GM12878 (cell line): ENCODE measurements at regions of chr12 and their contacts with region 1.

Region 1: DNA sequence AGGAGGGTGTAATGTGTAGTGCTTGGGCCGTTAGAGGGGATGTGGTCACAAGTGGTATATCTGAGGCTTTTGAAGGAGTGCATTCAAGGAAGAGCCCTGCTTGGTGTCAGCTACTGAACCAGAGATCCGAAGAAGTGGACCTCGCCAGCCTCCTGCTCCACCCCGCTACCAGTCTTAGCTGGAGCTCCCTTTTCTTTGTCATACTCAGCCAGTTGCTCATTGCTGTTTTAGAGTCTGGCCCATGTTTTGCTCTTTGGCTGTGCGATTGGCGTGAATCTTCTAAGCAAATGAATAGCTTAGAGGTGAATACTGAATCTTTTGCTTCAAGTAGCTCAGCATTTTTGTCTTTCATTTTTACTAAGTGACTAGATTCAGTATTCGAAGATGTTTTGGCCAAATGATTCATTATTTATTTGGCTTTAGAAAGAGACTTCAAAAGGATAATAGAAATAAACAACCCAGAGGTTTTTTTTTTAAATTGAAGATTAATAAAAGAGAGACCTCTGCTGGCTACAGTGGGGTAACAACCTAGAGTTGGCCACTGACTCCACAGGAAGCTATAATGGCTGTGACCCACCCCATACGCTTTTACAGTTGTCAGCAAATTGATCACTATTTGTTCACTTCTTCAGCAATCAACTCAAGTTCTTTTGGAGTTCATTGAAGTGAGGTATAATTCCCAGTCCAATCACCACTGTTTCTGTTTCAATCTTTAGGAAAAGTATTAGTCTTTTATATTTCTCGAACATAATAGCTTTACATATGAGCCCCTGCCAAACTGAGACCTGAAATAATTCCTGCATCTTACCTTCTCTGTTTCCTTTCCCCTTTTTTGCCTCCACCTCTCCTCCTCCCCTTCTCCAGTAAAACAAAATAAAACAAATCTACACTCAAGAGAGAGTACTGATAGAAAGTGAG is 19.9 kb downstream of the CDKN1B start:
- DNase-seq: peak; percentile 45
- ATAC-seq: peak; percentile 95
- H3K4me3 ChIP-seq: peak overlapping the region; percentile 48; the same call in 1 of the 2 replicates
- H3K27ac ChIP-seq: peak overlapping the region; percentile 71
- H3K4me1 ChIP-seq: peaks cover 5% of the 10 kb centered on the region
- H3K27me3 ChIP-seq: no peaks in the 10 kb centered on the region
- CTCF ChIP-seq: peak; percentile 53 to 63 (median 58); a peak in 5 of 6 replicates
- EP300 ChIP-seq: 0 out of 4 replicates have a peak, but pooled peaks of 1 of the 2 experiments have one; percentile 8
- POLR2A ChIP-seq: peak; percentile 44; the same call in 1 of the 2 replicates
- RAD21 ChIP-seq: peak; percentile 62

Region 2: DNA sequence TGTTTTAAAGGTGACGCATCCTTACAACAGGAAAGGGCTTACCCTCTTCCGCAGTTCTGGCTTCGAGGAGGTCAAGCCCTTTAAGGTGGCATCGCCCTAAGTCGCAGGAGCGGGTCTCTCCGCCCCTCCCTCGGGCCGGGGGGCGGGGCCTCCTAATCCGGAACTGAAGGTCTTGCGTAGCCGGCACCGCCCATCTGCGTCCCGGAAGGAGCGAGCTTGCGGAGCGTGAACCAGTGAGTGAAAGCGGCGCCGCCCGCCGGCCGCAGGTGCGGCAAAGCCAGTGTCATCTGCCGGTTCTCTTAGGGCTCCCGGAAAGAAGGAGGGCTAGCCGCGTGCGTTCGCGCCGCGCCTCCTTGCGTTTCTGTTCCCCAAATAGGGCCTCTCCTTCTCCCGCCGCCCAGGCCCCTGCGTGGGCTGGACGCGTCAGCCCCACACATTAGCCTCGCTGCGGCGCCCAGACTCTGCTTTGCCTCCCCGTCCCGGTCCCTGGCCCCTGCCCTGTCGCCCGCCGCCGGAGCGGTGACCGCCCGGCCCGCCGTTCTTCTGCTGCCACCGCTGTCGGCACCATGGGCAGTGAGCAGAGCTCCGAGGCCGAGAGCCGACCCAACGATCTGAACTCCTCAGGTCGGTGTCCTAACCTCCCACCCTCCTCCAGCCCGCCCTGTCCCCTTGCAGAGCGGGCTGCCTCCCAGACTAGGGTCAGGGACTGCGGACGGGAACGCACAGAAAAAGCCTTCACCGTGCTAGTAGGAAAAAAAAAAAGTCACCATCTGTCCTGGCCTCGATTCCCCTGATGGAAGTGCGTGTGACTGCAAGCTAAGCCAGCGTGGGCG is 379.9 kb before region 1 on chr12 and contains the start of gene BORCS5:
- CTCF ChIA-PET with region 1: interaction called, 19 read pairs
- POLR2A ChIA-PET with region 1: interaction called, 5 read pairs
- RAD21 ChIA-PET with region 1: interaction called, 18 read pairs
- SMC1A ChIA-PET with region 1: interaction called, 27 read pairs
- in situ Hi-C with region 1: no loop called
- intact Hi-C with region 1: no loop called
- DNase-seq: peak; percentile 94
- ATAC-seq: peak; percentile 92
- H3K4me3 ChIP-seq: peak within 1 kb of the TSS; percentile 71
- H3K27ac ChIP-seq: peak within 1 kb of the TSS; percentile 97
- H3K4me1 ChIP-seq: no peaks in the 10 kb centered on the region
- H3K27me3 ChIP-seq: no peaks in the 10 kb centered on the region
- CTCF ChIP-seq: peak; percentile 2 to 35 (median 24); a peak in 3 of 6 replicates
- EP300 ChIP-seq: peak in 1 of 2 experiments; percentile 59; a peak in 2 of 4 replicates
- POLR2A ChIP-seq: peak; percentile 96
- RAD21 ChIP-seq: no peak
- polyA plus RNA-seq, gene BORCS5: 1.4 to 1.7 TPM

Region 3: DNA sequence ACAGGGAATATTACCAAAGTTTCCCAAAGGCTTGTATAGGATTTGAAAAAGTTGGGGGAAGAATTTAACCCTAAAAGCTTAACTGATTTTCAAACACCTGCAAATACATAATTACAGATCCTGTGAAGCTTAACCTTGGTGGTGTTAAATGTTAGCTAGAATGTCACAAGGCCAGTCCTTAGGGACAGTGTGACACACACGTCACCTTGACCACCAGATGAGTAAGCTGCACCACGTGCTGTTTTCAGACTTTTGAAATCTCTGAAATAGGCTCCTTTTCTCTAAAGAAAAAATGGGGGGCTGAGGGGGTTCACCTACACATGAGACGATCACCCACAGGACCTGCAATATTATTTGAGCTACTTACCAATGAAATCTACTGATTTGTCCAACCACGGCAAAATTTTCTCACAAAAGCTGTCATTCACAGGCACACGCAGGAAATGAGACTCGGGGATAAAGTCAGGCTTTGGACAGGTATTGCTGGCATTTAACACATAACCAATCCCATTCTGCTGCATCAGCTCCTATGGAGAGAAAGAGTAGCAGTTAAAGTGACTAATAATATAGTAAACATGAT is 250.3 kb before region 1 on chr12:
- CTCF ChIA-PET with region 1: interaction called, 11 read pairs
- POLR2A ChIA-PET with region 1: no interaction called
- RAD21 ChIA-PET with region 1: interaction called, 11 read pairs
- SMC1A ChIA-PET with region 1: interaction called, 6 read pairs
- in situ Hi-C with region 1: no loop called
- intact Hi-C with region 1: no loop called
- DNase-seq: peak; percentile 57
- ATAC-seq: peak; percentile 93
- H3K4me3 ChIP-seq: no peak overlapping the region
- H3K27ac ChIP-seq: peak overlapping the region; percentile 58
- H3K4me1 ChIP-seq: peaks cover 19% of the 10 kb centered on the region
- H3K27me3 ChIP-seq: no peaks in the 10 kb centered on the region
- CTCF ChIP-seq: no peak
- EP300 ChIP-seq: peak; percentile 96 to 98
- POLR2A ChIP-seq: no peak
- RAD21 ChIP-seq: no peak

Region 4: DNA sequence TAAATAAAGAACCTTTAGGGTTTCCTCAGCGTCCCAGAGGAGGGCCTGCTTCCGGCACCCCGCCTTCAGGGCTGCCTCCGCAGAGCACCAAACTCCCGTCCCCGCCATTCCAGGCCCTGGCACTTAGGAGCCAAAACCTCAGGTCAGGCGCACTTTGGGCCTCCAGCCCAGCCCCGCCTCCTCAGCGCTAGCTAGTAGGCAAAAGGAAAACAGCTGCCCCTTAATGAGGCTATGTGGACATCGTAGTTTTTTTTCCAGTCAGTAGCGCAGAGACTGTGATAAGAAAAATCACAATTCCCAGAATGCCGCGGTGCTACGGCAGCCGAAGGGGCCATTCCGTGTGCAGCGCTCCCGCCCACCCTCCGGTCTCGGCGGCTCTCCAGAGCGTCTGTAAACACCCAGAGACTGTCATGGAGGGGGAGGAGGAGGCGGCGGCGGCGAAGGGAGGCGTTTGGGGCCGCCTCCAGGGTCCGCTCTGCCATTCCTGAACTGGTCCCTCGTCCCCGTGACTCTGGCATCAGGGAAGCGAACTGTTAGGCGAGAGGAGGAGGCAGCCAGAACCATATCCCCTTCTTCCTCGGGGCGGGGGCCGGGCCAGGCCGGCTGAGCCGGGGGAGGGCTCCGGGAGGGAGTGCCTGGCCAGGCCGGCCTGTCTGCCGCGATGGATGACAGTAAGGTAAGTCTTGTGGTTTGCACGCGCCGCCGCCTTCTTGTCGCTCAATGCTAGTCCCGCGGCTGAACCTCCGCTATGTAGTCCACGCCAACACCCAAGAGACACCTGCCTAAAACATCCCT is 125.3 kb before region 1 on chr12 and contains the start of gene CREBL2:
- CTCF ChIA-PET with region 1: interaction called, 24 read pairs
- POLR2A ChIA-PET with region 1: interaction called, 3 read pairs
- RAD21 ChIA-PET with region 1: interaction called, 18 read pairs
- SMC1A ChIA-PET with region 1: interaction called, 16 read pairs
- in situ Hi-C with region 1: no loop called
- intact Hi-C with region 1: no loop called
- DNase-seq: peak; percentile 80
- ATAC-seq: peak; percentile 82
- H3K4me3 ChIP-seq: peak within 1 kb of the TSS; percentile 86
- H3K27ac ChIP-seq: peak within 1 kb of the TSS; percentile 94
- H3K4me1 ChIP-seq: peaks cover 17% of the 10 kb centered on the region
- H3K27me3 ChIP-seq: no peaks in the 10 kb centered on the region
- CTCF ChIP-seq: no peak
- EP300 ChIP-seq: no peak
- POLR2A ChIP-seq: peak; percentile 92
- RAD21 ChIP-seq: no peak
- polyA plus RNA-seq, gene CREBL2: 4.6 to 5.2 TPM

Region 5: DNA sequence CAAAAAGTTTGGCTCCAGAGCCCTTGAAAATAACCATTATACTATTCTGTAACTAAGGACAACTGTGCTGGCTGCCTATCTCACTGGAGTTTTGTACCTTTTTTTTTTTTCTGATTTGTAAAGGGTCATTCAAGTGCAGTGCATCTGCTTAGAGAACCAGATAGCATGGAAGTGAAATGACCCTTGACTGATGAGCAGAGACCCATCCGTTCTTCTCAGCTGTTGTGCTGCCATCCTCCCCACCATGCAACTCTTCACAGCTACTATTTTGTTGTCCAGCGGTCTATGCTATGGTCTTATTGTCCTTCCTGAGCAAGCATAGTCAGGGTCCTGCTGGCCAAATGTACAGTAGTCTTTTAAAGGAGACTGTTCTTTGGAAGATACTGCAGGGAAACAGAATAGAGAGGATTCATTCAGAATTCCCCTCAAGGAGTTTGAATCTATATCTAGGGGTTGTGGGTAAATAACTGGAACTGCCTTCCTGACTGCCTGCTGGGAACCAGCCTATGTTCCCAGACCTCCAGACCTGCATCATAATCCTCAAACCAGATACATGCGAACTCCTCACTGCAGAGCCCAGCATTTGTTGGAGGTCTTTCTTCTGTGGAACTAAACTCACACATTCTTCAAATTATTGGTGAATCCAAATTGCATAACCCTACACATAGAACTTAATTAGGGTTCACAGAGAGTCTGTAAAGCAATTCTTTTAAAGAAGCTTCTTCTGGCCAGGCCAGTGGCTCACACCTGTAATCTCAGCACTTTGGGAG is 82.1 kb before region 1 on chr12:
- CTCF ChIA-PET with region 1: interaction called, 39 read pairs
- POLR2A ChIA-PET with region 1: interaction called, 6 read pairs
- RAD21 ChIA-PET with region 1: interaction called, 11 read pairs
- SMC1A ChIA-PET with region 1: interaction called, 24 read pairs
- in situ Hi-C with region 1: no loop called
- intact Hi-C with region 1: no loop called
- DNase-seq: no peak
- ATAC-seq: 0 out of 3 replicates have a peak, but pooled peaks have one; percentile 8
- H3K4me3 ChIP-seq: no peak overlapping the region
- H3K27ac ChIP-seq: no peak overlapping the region
- H3K4me1 ChIP-seq: no peaks in the 10 kb centered on the region; the same call in 1 of the 2 replicates
- H3K27me3 ChIP-seq: no peaks in the 10 kb centered on the region
- CTCF ChIP-seq: no peak
- EP300 ChIP-seq: no peak
- POLR2A ChIP-seq: no peak
- RAD21 ChIP-seq: no peak

Region 6: GRCh38 chr12:12704593-12705230 is 32.3 kb before region 1 on chr12:
- CTCF ChIA-PET with region 1: interaction called, 75 read pairs
- POLR2A ChIA-PET with region 1: interaction called, 7 read pairs
- RAD21 ChIA-PET with region 1: interaction called, 61 read pairs
- SMC1A ChIA-PET with region 1: interaction called, 48 read pairs
- in situ Hi-C with region 1: no loop called
- intact Hi-C with region 1: no loop called
- DNase-seq: no peak
- ATAC-seq: peak; percentile 89
- H3K4me3 ChIP-seq: no peak overlapping the region
- H3K27ac ChIP-seq: no peak overlapping the region
- H3K4me1 ChIP-seq: peaks cover 18% of the 10 kb centered on the region
- H3K27me3 ChIP-seq: no peaks in the 10 kb centered on the region
- CTCF ChIP-seq: peak; percentile 69 to 97 (median 93); a peak in 5 of 6 replicates
- EP300 ChIP-seq: no peak
- POLR2A ChIP-seq: no peak
- RAD21 ChIP-seq: peak; percentile 99

Region 7: DNA sequence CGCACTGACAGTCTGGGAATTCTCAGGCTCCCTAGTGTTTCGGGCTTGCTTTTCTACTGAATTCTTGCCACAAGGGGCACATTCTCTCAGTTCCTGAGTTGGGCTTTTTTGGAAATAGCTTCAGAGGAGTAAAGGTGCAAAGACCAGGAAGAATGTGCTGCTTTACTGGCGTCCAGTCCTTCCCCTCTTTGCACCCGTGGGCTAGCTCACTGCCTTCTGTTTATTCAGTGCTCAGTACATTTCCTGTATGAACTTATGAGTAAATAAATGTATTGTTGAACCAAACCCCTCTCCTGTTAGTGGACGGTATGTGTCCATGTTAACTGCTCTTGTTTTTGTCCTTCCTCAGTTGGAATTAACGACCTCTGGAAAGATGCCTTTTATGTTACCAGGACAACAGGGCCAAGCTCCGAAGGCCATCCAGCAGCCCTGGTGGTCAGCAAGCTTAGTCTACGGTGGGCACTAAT is 342.5 kb after region 1 on chr12:
- CTCF ChIA-PET with region 1: no interaction called
- POLR2A ChIA-PET with region 1: no interaction called
- RAD21 ChIA-PET with region 1: no interaction called
- SMC1A ChIA-PET with region 1: no interaction called
- in situ Hi-C with region 1: no loop called
- intact Hi-C with region 1: no loop called
- DNase-seq: no peak
- ATAC-seq: no peak
- H3K4me3 ChIP-seq: no peak overlapping the region
- H3K27ac ChIP-seq: no peak overlapping the region
- H3K4me1 ChIP-seq: no peaks in the 10 kb centered on the region
- H3K27me3 ChIP-seq: no peaks in the 10 kb centered on the region
- CTCF ChIP-seq: no peak
- EP300 ChIP-seq: no peak
- POLR2A ChIP-seq: no peak
- RAD21 ChIP-seq: no peak